H1 (cell line): ENCODE measurements at regions of chr1 and their contacts with region 1.

Region 1: DNA sequence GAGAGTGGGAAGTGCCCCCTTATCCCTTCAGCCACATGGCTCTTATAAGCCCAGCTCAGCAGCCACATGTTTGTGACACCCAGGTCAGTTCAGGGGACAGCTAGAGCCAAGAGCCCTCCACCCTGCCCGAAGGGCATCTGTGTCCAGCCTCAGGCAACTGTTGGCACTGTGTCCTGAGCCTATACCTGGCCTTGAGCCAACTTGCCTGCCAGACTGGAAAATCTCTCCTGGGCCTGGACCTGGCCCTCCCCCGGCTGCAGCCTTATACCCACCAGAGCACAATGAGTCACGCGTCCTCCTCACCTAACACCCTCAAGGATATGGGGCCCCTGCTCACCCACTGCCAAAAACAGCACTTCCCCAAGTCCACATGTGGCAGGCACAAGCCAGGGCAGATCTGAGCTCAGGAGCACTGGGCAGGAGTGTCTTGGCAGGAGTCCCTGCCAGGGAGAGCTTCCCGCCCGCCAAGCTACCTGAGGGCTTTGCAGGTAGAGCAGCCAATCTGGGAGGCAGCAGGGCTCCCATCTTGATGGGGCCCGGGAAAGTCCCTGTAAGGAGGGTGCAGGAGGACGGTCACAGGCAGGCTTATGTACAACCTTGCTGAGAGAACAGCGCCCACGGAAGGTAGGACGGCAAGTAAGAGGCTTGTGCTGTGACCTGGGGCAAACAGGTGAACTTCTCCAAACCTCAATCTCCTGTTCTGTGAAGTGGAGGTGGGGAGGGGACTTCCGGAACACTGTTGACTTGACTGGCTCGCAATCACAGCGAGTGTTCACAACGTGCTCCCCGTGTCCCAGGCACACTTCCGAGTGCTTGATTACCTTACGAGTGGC is 19.8 kb upstream of the HSPG2 start:
- DNase-seq: no peak
- H3K4me3 ChIP-seq: no peak overlapping the region
- H3K27ac ChIP-seq: no peak overlapping the region
- H3K4me1 ChIP-seq: peaks cover 5 to 17% (median 11%) of the 10 kb centered on the region in 4 experiments; a peak in 6 of 7 replicates
- H3K27me3 ChIP-seq: no peaks in the 10 kb centered on the region
- CTCF ChIP-seq: no peak
- EP300 ChIP-seq: no peak
- POLR2A ChIP-seq: no peak
- RAD21 ChIP-seq: no peak

Region 2: DNA sequence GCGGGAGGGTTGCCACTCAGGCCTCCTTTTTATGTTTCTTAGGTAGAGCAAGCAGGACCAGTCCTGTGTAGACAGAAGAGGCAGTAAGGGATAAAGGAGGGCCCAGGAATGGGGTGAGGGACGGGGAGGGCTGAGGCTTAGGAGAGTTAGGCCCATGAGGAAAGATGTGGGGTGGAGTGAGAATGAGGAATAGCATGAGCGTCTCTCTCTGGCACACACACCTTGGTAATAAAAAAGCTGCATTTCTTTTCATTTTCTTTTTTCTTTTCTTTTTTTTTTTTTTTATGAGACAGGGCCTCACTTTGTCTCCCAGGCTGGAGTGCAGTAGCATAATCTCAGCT is 12.2 kb before region 1 on chr1:
- CTCF ChIA-PET with region 1: interaction called, 8 read pairs
- POLR2A ChIA-PET with region 1: interaction called, 13 read pairs
- DNase-seq: peak in 1 of 2 experiments; percentile 72
- H3K4me3 ChIP-seq: no peak overlapping the region; a peak in 1 of 8 replicates
- H3K27ac ChIP-seq: peak overlapping the region; percentile 94
- H3K4me1 ChIP-seq: peaks cover 5 to 22% (median 10%) of the 10 kb centered on the region in 4 experiments
- H3K27me3 ChIP-seq: peaks cover 0 to 2% (median 0%) of the 10 kb centered on the region in 4 experiments; a peak in 1 of 7 replicates
- CTCF ChIP-seq: no peak
- EP300 ChIP-seq: no peak
- POLR2A ChIP-seq: no peak
- RAD21 ChIP-seq: no peak

Region 3: GRCh38 chr1:22075718-22076117 is 118.8 kb after region 1 on chr1:
- CTCF ChIA-PET with region 1: no interaction called
- POLR2A ChIA-PET with region 1: no interaction called
- DNase-seq: no peak
- H3K4me3 ChIP-seq: no peak overlapping the region
- H3K27ac ChIP-seq: no peak overlapping the region
- H3K4me1 ChIP-seq: peaks cover 0 to 8% (median 1%) of the 10 kb centered on the region in 4 experiments; a peak in 5 of 7 replicates
- H3K27me3 ChIP-seq: no peaks in the 10 kb centered on the region
- CTCF ChIP-seq: no peak
- EP300 ChIP-seq: no peak
- POLR2A ChIP-seq: no peak
- RAD21 ChIP-seq: no peak